ENCODE measurements at regions of chr18 and their contacts with region 1.

Region 1: GRCh38 chr18:12933327-12933726 is 14.5 kb upstream of the SEH1L start:
- DNase-seq: no peak
- H3K4me3 ChIP-seq: no peak overlapping the region
- H3K27ac ChIP-seq: no peak overlapping the region
- H3K4me1 ChIP-seq: no peaks in the 10 kb centered on the region
- H3K27me3 ChIP-seq: no peaks in the 10 kb centered on the region
- CTCF ChIP-seq: no peak
- POLR2A ChIP-seq: no peak

Region 2: DNA sequence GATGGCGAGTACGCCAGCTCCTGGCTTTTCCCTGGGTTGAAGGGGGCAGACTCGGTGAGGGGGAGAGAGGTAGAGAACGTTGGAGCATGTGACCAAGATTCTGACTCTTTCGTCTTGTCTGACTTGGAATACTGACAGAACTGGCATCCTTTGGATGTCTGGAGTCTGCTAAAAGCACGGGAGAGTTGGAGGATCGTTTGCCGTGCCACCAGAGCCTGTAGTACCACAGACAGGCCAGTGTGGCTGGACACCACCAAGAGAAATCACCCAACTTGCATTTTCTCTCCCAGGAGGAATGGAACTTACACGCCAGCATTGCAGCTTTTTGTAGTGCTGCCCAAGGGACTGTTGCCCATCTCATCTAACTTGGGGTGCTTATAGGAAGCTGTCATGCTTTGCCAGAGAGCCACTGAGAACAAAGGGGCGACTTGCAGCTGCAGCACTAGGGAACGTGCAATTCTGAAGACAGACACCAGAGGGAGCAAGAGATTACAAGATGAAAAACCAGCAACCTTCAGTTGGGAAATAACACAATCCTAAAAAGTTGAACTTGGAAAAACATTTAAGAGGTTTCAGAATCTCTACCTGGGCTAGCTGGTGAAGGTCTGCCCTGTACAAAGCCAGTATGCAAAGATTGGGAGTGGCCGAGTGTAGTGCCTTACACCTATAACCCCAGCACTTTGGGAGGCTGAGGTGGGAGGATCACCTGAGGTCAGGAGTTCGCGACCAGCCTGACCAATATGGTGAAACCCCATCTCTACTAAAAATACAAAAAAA is 206.4 kb before region 1 on chr18:
- intact Hi-C with region 1: loop called (anchors 2 kb)
- DNase-seq: no peak
- H3K4me3 ChIP-seq: no peak overlapping the region
- H3K27ac ChIP-seq: no peak overlapping the region
- H3K4me1 ChIP-seq: no peaks in the 10 kb centered on the region
- H3K27me3 ChIP-seq: no peaks in the 10 kb centered on the region
- CTCF ChIP-seq: peak; percentile 89 to 96 (median 90)
- POLR2A ChIP-seq: no peak

Region 3: DNA sequence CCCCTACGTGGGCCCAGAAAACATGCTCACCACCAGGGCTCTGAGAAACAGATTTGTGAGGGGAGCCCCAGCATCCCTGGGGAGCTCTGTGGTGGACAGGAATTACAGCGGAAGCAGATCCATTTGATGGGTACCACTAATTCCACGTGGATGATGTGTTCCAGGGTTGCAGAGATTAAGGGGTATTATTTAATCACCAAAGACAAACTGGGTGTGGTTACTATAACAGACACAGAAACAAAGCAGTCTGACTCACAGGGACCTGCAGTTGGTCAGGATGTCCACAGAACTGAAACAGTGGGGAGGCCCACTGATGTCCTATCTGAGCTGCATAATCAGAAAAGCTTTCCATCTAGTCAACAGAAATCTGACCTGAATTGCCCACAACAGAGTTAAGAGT is 164.7 kb before region 1 on chr18:
- intact Hi-C with region 1: no loop called
- DNase-seq: peak in 1 of 2 donors; percentile 43
- H3K4me3 ChIP-seq: no peak overlapping the region
- H3K27ac ChIP-seq: no peak overlapping the region
- H3K4me1 ChIP-seq: no peaks in the 10 kb centered on the region
- H3K27me3 ChIP-seq: no peaks in the 10 kb centered on the region
- CTCF ChIP-seq: no peak
- POLR2A ChIP-seq: no peak

Measured in vagina (tissue), 2 donors.